SK-N-SH (cell line): ENCODE measurements at regions of chr6 and their contacts with region 1.

Region 1: DNA sequence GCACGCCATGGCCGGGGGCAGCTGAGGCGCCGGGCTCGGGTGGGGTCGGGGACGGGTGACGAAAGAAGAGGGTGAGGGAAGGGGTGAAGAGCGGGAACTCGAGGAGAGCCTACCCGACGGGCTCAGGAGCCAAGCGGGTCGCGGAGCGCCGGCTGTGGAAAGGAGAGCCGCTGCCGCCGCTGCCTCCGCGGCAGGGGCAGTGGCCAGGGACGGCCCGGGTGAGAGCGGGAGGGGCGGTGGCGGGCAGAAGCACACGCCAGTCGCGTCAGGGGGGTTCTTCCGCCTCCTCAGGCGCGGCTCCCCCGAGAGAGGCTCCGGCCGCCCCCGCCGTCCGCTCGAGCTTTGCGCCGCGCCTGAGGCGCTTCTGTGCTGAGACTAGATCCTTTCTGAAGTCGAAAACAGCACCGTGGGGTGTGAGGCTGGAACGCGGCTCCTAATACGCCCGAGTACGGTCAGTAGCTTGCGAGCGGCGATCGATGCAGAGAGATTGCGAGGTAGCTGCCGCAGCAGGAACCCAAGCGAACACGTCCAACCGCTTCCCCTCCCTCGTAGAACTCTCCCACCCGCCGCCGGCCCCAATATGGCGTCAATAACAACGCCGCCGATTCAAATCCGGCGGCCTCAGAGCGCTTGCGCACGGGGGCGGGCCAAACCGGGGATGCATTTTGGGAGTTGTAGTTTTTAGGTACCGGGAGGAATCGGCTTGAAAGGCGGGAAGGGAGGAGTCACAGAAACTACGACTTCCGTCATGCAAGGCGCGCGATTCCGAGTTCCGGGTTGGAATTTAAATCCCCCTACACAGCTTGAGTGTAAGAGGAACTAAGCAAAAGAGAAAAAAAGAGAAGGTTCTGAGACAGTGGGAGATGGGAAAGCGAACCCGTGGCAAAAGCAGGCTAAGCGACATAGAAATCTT is at the start of gene AKIRIN2:
- DNase-seq: peak; percentile 91
- H3K4me3 ChIP-seq: peak within 1 kb of the TSS; percentile 93 to 98
- H3K27ac ChIP-seq: peak within 1 kb of the TSS; percentile 92 to 97
- H3K4me1 ChIP-seq: peaks cover 9 to 19% of the 10 kb centered on the region in 2 experiments
- H3K27me3 ChIP-seq: no peaks in the 10 kb centered on the region
- CTCF ChIP-seq: no peak
- EP300 ChIP-seq: no peak; a peak in 1 of 4 replicates
- RAD21 ChIP-seq: peak; percentile 12; the same call in 1 of the 2 replicates
- polyA plus RNA-seq, gene AKIRIN2: 12.3 and 19.0 TPM in 2 replicates

Region 2: DNA sequence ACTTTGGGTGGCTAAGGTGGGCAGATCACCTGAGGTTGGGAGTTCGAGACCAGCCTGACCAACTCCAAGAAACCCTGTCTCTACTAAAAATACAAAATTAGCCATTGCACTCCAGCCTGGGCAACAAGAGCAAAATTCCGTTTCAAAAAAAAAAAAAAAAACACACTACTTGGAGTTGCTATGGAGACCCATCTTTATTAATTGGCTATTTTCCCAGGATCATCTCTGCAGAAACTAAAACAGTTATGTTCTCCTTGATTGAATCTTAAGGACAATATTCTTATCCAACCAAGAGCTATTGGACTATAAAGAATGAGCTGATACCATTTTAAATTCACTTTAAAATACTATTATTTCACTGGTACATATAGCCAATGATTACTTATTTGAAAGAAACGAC is 14.6 kb before region 1 on chr6:
- CTCF ChIA-PET with region 1: interaction called, 10 read pairs
- POLR2A ChIA-PET with region 1: no interaction called
- DNase-seq: no peak
- H3K4me3 ChIP-seq: no peak overlapping the region
- H3K27ac ChIP-seq: no peak overlapping the region
- H3K4me1 ChIP-seq: no peaks in the 10 kb centered on the region; a peak in 1 of 4 replicates
- H3K27me3 ChIP-seq: no peaks in the 10 kb centered on the region
- CTCF ChIP-seq: no peak
- EP300 ChIP-seq: no peak
- RAD21 ChIP-seq: no peak

Region 3: GRCh38 chr6:87772597-87773530 is 70.9 kb after region 1 on chr6:
- CTCF ChIA-PET with region 1: no interaction called
- POLR2A ChIA-PET with region 1: interaction called, 12 read pairs
- DNase-seq: peak; percentile 55
- H3K4me3 ChIP-seq: 0 out of 4 replicates have a peak overlapping the region, but pooled peaks of 1 of the 2 experiments have one; percentile 7
- H3K27ac ChIP-seq: peak overlapping the region; percentile 4 to 86; a peak in 3 of 4 replicates
- H3K4me1 ChIP-seq: peaks cover 0 to 9% of the 10 kb centered on the region in 2 experiments; a peak in 2 of 4 replicates
- H3K27me3 ChIP-seq: no peaks in the 10 kb centered on the region
- CTCF ChIP-seq: no peak
- EP300 ChIP-seq: peak in 1 of 2 experiments; percentile 42; a peak in 1 of 4 replicates
- RAD21 ChIP-seq: no peak; the same call in 1 of the 2 replicates

Region 4: DNA sequence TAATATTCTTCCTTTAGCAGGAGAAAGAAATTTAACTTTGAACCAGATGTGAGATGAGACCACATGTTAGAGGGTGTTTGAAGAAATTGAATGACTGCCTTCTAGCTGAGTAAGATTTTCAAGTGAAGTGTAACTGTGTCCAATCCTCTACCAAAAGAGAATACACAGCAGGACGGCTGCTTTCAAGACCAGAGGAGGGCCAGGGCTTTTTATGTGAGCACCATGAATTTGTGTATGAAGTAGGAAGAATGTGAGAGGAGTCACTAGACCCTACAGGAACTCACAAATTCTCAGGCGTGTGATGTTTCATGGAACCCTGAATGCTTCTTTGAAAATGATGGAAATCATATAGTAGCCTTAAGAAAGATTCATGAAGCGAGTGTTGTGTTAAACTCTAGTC is 288.9 kb after region 1 on chr6:
- CTCF ChIA-PET with region 1: no interaction called
- POLR2A ChIA-PET with region 1: no interaction called
- DNase-seq: no peak
- H3K4me3 ChIP-seq: no peak overlapping the region
- H3K27ac ChIP-seq: no peak overlapping the region
- H3K4me1 ChIP-seq: no peaks in the 10 kb centered on the region; a peak in 1 of 4 replicates
- H3K27me3 ChIP-seq: no peaks in the 10 kb centered on the region
- CTCF ChIP-seq: no peak
- EP300 ChIP-seq: no peak
- RAD21 ChIP-seq: no peak